ENCODE measurements at regions of chr6 and their contacts with region 1.

Region 1: DNA sequence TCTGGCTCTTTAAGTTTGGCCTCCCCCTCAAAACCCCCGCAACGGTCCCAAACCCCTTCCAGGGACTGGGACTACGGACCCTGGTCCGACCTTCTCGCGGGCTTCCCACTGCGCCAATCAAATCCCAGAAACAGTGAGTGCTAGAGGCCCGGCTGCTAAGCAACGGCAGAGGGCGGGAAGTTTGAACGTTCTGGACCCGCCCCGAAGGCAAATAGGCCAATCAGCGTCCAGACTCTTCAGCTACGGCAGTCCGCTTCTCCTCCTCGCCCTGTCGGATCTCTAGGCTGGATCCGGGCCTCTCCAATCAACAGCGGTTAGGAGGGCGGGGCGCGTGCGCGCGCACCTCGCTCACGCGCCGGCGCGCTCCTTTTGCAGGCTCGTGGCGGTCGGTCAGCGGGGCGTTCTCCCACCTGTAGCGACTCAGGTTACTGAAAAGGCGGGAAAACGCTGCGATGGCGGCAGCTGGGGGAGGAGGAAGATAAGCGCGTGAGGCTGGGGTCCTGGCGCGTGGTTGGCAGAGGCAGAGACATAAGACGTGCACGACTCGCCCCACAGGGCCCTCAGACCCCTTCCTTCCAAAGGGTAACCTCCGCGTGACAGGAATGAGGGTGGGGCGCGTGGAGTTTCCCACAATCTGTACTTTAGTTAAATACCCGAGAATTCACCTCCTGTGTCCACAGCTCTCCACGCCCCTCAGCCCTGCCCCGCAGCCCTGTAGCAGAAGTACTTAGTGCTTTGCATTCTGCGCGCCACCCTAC is at the start of gene MSH5:
- DNase-seq: peak; percentile 85 to 98 (median 93)
- ATAC-seq: peak; percentile 85
- H3K4me3 ChIP-seq: peak within 1 kb of the TSS; percentile 87
- H3K4me3 Mint-ChIP-seq: peak within 1 kb of the TSS; percentile 90
- H3K27ac ChIP-seq: peak within 1 kb of the TSS; percentile 38 to 58
- H3K27ac Mint-ChIP-seq: peak within 1 kb of the TSS; percentile 85
- H3K4me1 ChIP-seq: peaks cover 53% of the 10 kb centered on the region
- H3K4me1 Mint-ChIP-seq: peaks cover 61% of the 10 kb centered on the region
- H3K27me3 ChIP-seq: no peaks in the 10 kb centered on the region
- H3K27me3 Mint-ChIP-seq: no peaks in the 10 kb centered on the region
- CTCF ChIP-seq: no peak
- total RNA-seq, gene MSH5: 13.6 to 13.7 TPM

Region 2: GRCh38 chr6:31702819-31703522 is 36.8 kb before region 1 on chr6 and contains the start of gene ABHD16A:
- CTCF ChIA-PET with region 1: interaction called, 3 read pairs
- POLR2A ChIA-PET with region 1: interaction called, 9 read pairs
- intact Hi-C with region 1: loop called (anchors 2 to 5 kb)
- DNase-seq: peak; percentile 94 to 99 (median 97)
- ATAC-seq: peak; percentile 91
- H3K4me3 ChIP-seq: peak within 1 kb of the TSS; percentile 67
- H3K4me3 Mint-ChIP-seq: peak within 1 kb of the TSS; percentile 94
- H3K27ac ChIP-seq: peak within 1 kb of the TSS; percentile 95 to 98
- H3K27ac Mint-ChIP-seq: peak within 1 kb of the TSS; percentile 94
- H3K4me1 ChIP-seq: peaks cover 35% of the 10 kb centered on the region
- H3K4me1 Mint-ChIP-seq: peaks cover 33% of the 10 kb centered on the region
- H3K27me3 ChIP-seq: no peaks in the 10 kb centered on the region
- H3K27me3 Mint-ChIP-seq: no peaks in the 10 kb centered on the region
- CTCF ChIP-seq: no peak
- total RNA-seq, gene ABHD16A: 52.3 to 59.3 TPM

Region 3: GRCh38 chr6:31752739-31753319 is 13.0 kb after region 1 on chr6:
- CTCF ChIA-PET with region 1: no interaction called
- POLR2A ChIA-PET with region 1: no interaction called
- intact Hi-C with region 1: no loop called
- DNase-seq: no peak
- ATAC-seq: no peak
- H3K4me3 ChIP-seq: no peak overlapping the region
- H3K4me3 Mint-ChIP-seq: no peak overlapping the region
- H3K27ac ChIP-seq: no peak overlapping the region
- H3K27ac Mint-ChIP-seq: no peak overlapping the region
- H3K4me1 ChIP-seq: no peaks in the 10 kb centered on the region
- H3K4me1 Mint-ChIP-seq: no peaks in the 10 kb centered on the region
- H3K27me3 ChIP-seq: no peaks in the 10 kb centered on the region
- H3K27me3 Mint-ChIP-seq: no peaks in the 10 kb centered on the region
- CTCF ChIP-seq: no peak

Region 4: GRCh38 chr6:31769684-31770371 is 30.0 kb after region 1 on chr6:
- CTCF ChIA-PET with region 1: interaction called, 34 read pairs
- POLR2A ChIA-PET with region 1: interaction called, 9 read pairs
- intact Hi-C with region 1: loop called in 1 of 2 experiments (anchors 2 kb)
- DNase-seq: peak; percentile 66 to 89 (median 75)
- ATAC-seq: peak; percentile 79
- H3K4me3 ChIP-seq: no peak overlapping the region
- H3K4me3 Mint-ChIP-seq: peak overlapping the region; percentile 48
- H3K27ac ChIP-seq: no peak overlapping the region
- H3K27ac Mint-ChIP-seq: no peak overlapping the region
- H3K4me1 ChIP-seq: peaks cover 49% of the 10 kb centered on the region
- H3K4me1 Mint-ChIP-seq: peaks cover 27% of the 10 kb centered on the region
- H3K27me3 ChIP-seq: no peaks in the 10 kb centered on the region
- H3K27me3 Mint-ChIP-seq: no peaks in the 10 kb centered on the region
- CTCF ChIP-seq: peak; percentile 63

Region 5: GRCh38 chr6:31776989-31777666 is 37.3 kb after region 1 on chr6 and contains the start of gene VWA7:
- CTCF ChIA-PET with region 1: no interaction called
- POLR2A ChIA-PET with region 1: interaction called, 5 read pairs
- intact Hi-C with region 1: loop called in 1 of 2 experiments (anchors 2 kb)
- DNase-seq: peak; percentile 33 to 83 (median 55)
- ATAC-seq: peak; percentile 81
- H3K4me3 ChIP-seq: peak within 1 kb of the TSS; percentile 31
- H3K4me3 Mint-ChIP-seq: no peak within 1 kb of the TSS
- H3K27ac ChIP-seq: no peak within 1 kb of the TSS
- H3K27ac Mint-ChIP-seq: no peak within 1 kb of the TSS
- H3K4me1 ChIP-seq: peaks cover 54% of the 10 kb centered on the region
- H3K4me1 Mint-ChIP-seq: peaks cover 29% of the 10 kb centered on the region
- H3K27me3 ChIP-seq: no peaks in the 10 kb centered on the region
- H3K27me3 Mint-ChIP-seq: no peaks in the 10 kb centered on the region
- CTCF ChIP-seq: no peak
- total RNA-seq, gene VWA7: 1.7 TPM

Region 6: DNA sequence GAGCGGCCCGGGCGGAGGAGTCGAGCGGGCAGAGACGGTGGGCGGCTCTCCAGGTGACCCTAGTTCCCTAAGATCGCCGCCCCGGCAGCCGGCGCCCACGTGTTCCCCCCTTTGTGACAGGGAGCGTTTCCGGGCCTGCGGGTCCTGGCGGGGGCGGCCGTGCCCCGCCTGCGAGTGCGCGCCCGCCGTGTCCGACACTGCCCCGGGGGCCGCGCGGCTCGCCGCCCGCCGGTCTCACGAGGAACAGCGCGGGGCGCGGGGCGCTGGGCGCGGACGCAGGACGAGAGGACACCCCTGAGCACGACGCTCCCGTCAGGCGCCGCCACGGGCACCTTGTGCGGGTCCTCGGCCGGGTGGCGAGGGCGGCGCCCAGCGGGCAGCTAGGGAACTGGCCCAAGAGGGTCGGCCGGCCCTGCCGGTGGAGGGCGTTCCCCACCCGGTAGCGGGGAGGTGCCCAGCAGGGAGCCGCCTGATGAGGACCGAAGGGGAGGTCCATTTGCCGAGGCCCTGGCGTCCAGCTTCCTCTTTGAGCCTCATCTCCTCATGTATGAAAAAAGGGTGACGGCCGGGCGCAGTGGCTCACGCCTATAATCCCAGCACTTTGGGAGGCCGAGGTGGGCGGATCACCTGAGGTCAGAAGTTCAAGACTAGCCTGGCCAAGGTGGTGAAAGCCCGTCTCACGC is 55.9 kb after region 1 on chr6 and contains the start of gene VARS1:
- CTCF ChIA-PET with region 1: interaction called, 12 read pairs
- POLR2A ChIA-PET with region 1: interaction called, 10 read pairs
- intact Hi-C with region 1: loop called (anchors 2 kb)
- DNase-seq: peak; percentile 69 to 94 (median 80)
- ATAC-seq: peak; percentile 79
- H3K4me3 ChIP-seq: peak within 1 kb of the TSS; percentile 77
- H3K4me3 Mint-ChIP-seq: peak within 1 kb of the TSS; percentile 97
- H3K27ac ChIP-seq: peak within 1 kb of the TSS; percentile 81 to 90
- H3K27ac Mint-ChIP-seq: peak within 1 kb of the TSS; percentile 54
- H3K4me1 ChIP-seq: peaks cover 49% of the 10 kb centered on the region
- H3K4me1 Mint-ChIP-seq: peaks cover 38% of the 10 kb centered on the region
- H3K27me3 ChIP-seq: no peaks in the 10 kb centered on the region
- H3K27me3 Mint-ChIP-seq: no peaks in the 10 kb centered on the region
- CTCF ChIP-seq: peak; percentile 76
- total RNA-seq, gene VARS1: 43.9 to 44.2 TPM

Region 7: DNA sequence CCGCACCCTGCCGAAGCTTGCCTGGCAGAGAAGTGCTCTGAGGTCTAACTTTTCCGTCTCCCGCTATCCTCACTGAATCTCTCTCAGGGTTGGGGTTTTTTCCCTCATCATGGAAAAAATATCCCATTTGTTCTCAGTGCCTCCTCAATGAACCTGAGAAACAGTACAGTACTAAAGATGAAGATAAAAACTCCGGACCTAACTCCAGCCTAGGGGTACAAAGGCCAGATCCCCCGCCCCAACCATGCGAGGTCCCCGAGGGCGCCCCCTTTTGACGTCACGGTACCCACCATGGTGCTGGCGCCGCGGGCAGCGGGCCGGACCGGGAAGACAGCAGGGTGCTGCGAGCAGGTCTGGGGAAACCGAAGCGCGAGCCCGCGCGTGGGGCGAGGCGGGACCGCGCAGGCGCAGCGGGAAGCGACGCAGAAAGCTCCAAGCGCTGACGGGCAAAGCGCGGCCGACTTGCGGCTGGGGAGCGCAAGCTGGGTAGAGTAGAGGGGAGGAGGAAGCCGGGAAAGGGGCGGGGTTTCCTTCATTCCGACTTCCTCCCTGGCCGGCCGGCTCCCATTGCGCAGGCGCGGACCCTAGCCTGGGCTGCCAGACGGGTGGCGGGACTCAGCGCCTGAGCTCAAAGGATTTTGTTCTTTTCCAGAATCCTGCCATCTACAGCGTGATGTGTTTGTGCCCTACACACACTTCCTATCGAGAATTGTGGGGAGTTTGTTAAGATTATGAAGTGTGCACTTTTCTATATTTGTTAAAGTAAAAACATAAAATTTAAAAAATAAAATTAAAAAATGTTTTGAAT is 66.9 kb after region 1 on chr6 and contains the start of gene LSM2:
- CTCF ChIA-PET with region 1: interaction called, 7 read pairs
- POLR2A ChIA-PET with region 1: interaction called, 13 read pairs
- intact Hi-C with region 1: no loop called
- DNase-seq: peak; percentile 93 to 99 (median 96)
- ATAC-seq: peak; percentile 99
- H3K4me3 ChIP-seq: peak within 1 kb of the TSS; percentile 70
- H3K4me3 Mint-ChIP-seq: peak within 1 kb of the TSS; percentile 86
- H3K27ac ChIP-seq: peak within 1 kb of the TSS; percentile 78 to 83
- H3K27ac Mint-ChIP-seq: peak within 1 kb of the TSS; percentile 87
- H3K4me1 ChIP-seq: peaks cover 28% of the 10 kb centered on the region
- H3K4me1 Mint-ChIP-seq: peaks cover 34% of the 10 kb centered on the region
- H3K27me3 ChIP-seq: no peaks in the 10 kb centered on the region
- H3K27me3 Mint-ChIP-seq: no peaks in the 10 kb centered on the region
- CTCF ChIP-seq: no peak
- total RNA-seq, gene LSM2: 12.6 to 13.7 TPM

Region 8: DNA sequence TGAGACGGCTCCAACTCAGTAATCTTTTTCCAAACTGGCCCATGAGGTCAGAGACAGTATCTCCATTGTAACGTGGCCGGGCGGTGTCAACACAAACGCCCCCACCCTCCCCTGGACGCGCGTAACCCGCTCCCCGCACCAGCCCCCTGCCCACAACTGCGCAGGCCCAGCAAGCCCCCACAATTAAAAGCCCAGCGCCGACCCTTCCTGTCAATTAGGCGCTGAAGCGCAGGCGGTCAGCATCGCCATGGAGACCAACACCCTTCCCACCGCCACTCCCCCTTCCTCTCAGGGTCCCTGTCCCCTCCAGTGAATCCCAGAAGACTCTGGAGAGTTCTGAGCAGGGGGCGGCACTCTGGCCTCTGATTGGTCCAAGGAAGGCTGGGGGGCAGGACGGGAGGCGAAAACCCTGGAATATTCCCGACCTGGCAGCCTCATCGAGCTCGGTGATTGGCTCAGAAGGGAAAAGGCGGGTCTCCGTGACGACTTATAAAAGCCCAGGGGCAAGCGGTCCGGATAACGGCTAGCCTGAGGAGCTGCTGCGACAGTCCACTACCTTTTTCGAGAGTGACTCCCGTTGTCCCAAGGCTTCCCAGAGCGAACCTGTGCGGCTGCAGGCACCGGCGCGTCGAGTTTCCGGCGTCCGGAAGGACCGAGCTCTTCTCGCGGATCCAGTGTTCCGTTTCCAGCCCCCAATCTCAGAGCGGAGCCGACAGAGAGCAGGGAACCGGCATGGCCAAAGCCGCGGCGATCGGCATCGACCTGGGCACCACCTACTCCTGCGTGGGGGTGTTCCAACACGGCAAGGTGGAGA is 75.4 kb after region 1 on chr6 and contains the starts of genes HSPA1A and HSPA1L:
- CTCF ChIA-PET with region 1: interaction called, 6 read pairs
- POLR2A ChIA-PET with region 1: interaction called, 15 read pairs
- intact Hi-C with region 1: loop called in 1 of 2 experiments (anchors 5 kb)
- DNase-seq: peak in 11 of 14 experiments; percentile 25 to 76 (median 60)
- ATAC-seq: peak; percentile 11
- H3K4me3 ChIP-seq: peak within 1 kb of the TSS; percentile 70
- H3K4me3 Mint-ChIP-seq: peak within 1 kb of the TSS; percentile 90
- H3K27ac ChIP-seq: peak within 1 kb of the TSS; percentile 75 to 81
- H3K27ac Mint-ChIP-seq: peak within 1 kb of the TSS; percentile 83
- H3K4me1 ChIP-seq: peaks cover 49% of the 10 kb centered on the region
- H3K4me1 Mint-ChIP-seq: peaks cover 47% of the 10 kb centered on the region
- H3K27me3 ChIP-seq: no peaks in the 10 kb centered on the region
- H3K27me3 Mint-ChIP-seq: no peaks in the 10 kb centered on the region
- CTCF ChIP-seq: no peak
- total RNA-seq, gene HSPA1A: 8.1 to 9.8 TPM
- total RNA-seq, gene HSPA1L: 1.7 to 1.8 TPM